Sigmoid colon (tissue), 7 donors: ENCODE measurements at regions of chr21 and their contacts with region 1.

Region 1: DNA sequence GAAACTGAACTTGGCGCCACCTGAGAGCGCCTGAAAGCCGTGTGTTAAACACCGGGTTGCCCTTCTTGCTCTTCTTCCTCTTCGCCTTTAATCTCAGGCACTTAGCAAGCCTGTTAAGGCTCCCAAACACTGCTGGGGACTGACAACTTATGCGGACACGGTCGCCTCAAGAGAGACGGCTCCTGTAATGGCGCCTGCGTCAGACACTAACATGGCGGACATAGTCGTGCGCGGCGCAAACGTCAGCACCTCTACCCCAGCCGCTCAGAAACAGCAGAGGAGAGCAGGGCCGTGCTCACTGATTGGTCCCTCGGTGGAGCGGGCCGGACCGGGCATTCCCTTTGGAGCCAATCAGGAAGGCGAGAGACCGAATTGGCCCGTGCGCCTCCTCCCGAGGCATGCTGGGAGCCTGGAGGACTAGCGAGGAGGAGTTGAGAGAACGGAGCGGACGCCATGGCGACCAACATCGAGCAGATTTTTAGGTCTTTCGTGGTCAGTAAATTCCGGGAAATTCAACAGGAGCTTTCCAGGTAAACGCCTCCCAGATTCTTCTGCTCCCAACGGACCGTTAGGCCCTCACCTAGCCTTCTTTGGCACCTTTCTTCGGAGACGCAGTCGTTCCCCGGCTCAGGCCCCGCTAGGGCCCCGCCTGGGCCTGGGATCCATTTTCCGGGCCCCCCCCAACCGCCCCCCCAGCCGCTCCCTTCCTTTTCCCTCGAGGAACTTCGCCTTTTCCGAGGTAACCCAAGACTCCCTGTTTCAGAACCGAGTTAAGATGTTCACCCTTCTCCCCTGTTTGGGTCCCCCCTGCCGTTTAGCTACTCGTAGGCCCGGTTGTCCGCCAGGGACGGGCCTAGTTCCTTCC is at the start of gene SON:
- DNase-seq: peak; percentile 100
- H3K4me3 ChIP-seq: peak within 1 kb of the TSS; percentile 59 to 79 (median 64)
- H3K27ac ChIP-seq: peak within 1 kb of the TSS; percentile 95 to 99 (median 98)
- H3K4me1 ChIP-seq: peaks cover 0 to 43% (median 40%) of the 10 kb centered on the region in 4 donors
- H3K27me3 ChIP-seq: no peaks in the 10 kb centered on the region
- CTCF ChIP-seq: no peak
- EP300 ChIP-seq: no peak
- POLR2A ChIP-seq: peak; percentile 84 to 88
- total RNA-seq, gene SON: 177 to 244 (median 190) TPM

Region 2: GRCh38 chr21:33324291-33325221 is 218.3 kb before region 1 on chr21 and contains the start of gene IFNAR1:
- intact Hi-C with region 1: loop called (anchors 10 kb)
- DNase-seq: peak; percentile 100
- H3K4me3 ChIP-seq: peak within 1 kb of the TSS; percentile 76 to 99 (median 88)
- H3K27ac ChIP-seq: peak within 1 kb of the TSS; percentile 94 to 98 (median 98)
- H3K4me1 ChIP-seq: peaks cover 0 to 28% (median 19%) of the 10 kb centered on the region in 4 donors
- H3K27me3 ChIP-seq: no peaks in the 10 kb centered on the region
- CTCF ChIP-seq: no peak
- EP300 ChIP-seq: no peak
- POLR2A ChIP-seq: peak; percentile 79 to 90
- total RNA-seq, gene IFNAR1: 23.5 to 32.6 (median 25.5) TPM

Region 3: DNA sequence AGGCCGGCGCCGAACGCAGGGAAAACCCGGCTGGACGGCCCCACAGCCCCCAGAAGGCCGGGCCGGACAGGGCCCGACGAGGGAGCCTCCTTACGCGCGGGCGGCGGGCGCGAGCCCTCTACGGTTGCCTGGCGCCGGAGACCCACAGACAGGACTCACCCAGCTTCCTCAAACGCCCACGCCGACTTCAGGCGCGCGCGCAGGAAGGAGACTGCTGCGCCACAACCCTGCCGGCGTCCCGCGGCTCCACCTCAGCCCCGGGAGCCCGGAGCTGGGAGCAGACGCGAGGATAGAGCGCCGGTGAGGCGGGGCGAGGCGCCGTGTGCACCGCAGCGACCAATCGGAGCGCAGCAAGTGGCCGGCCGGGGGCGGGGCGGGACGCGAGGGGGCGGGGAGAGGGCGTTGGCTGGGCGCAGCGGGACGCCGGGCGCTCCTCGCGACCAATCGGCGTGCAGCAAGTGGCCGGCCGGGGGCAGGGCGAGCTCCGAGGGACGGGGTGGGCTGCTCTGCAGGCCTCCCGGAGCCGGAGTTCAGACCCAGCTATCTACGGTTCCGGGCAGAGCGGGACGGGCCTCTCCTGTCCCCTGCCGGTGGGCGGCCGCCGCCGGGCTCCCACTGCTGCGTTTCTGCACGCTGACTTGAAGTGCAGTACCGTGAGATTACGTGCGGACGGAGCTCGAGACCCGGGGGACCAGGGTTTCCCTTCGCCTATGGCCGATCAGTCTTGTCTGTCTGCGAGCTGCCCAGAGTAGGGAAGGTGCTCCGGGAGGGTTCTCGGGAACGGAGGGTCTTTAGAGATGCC is 63.0 kb before region 1 on chr21 and contains the start of gene TMEM50B:
- intact Hi-C with region 1: loop called (anchors 2 kb)
- DNase-seq: peak; percentile 98
- H3K4me3 ChIP-seq: peak within 1 kb of the TSS; percentile 86 to 99 (median 96)
- H3K27ac ChIP-seq: peak within 1 kb of the TSS; percentile 96 to 100 (median 99)
- H3K4me1 ChIP-seq: peaks cover 3 to 21% (median 17%) of the 10 kb centered on the region in 4 donors
- H3K27me3 ChIP-seq: no peaks in the 10 kb centered on the region
- CTCF ChIP-seq: peak; percentile 46 to 60 (median 51)
- EP300 ChIP-seq: no peak
- POLR2A ChIP-seq: peak; percentile 88 to 93
- total RNA-seq, gene TMEM50B: 63.3 to 106 (median 85.1) TPM

Region 4: GRCh38 chr21:33491373-33492102 is 51.3 kb before region 1 on chr21 and contains the start of gene DNAJC28:
- intact Hi-C with region 1: loop called (anchors 1 kb)
- DNase-seq: peak; percentile 96
- H3K4me3 ChIP-seq: peak within 1 kb of the TSS; percentile 49 to 69 (median 62)
- H3K27ac ChIP-seq: peak within 1 kb of the TSS; percentile 76 to 81 (median 80)
- H3K4me1 ChIP-seq: peaks cover 0 to 8% (median 3%) of the 10 kb centered on the region in 4 donors
- H3K27me3 ChIP-seq: no peaks in the 10 kb centered on the region
- CTCF ChIP-seq: no peak
- EP300 ChIP-seq: no peak
- POLR2A ChIP-seq: peak in 1 of 2 donors; percentile 42
- total RNA-seq, gene DNAJC28: 2.0 to 3.0 (median 2.6) TPM

Region 5: GRCh38 chr21:33588485-33589335 is 45.8 kb after region 1 on chr21 and contains the start of gene DONSON:
- intact Hi-C with region 1: loop called (anchors 2 kb)
- DNase-seq: peak; percentile 91
- H3K4me3 ChIP-seq: peak within 1 kb of the TSS; percentile 48 to 91 (median 78)
- H3K27ac ChIP-seq: peak within 1 kb of the TSS; percentile 89 to 91 (median 90)
- H3K4me1 ChIP-seq: peaks cover 0 to 21% (median 13%) of the 10 kb centered on the region in 4 donors
- H3K27me3 ChIP-seq: no peaks in the 10 kb centered on the region
- CTCF ChIP-seq: no peak
- EP300 ChIP-seq: no peak
- POLR2A ChIP-seq: no peak
- total RNA-seq, gene DONSON: 4.6 to 7.2 (median 5.9) TPM

Region 6: DNA sequence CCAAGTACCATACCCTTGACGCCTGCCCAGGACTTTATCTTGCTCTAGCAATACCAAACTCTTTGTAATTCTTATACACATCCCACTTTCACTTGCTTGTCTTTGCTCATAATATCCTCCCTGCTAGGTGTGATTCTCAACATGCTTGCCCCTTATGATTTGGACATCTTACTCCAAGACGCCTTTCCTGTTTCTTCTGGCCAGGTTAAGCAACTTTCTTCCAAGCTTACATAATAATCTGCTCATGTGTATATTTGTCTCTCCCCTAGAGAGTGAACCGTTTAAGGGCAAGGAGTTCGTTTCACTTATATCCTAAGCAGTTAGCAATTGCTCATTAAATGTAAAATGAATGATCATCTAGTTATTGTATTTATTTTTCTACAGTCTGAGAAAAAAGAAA is 76.9 kb after region 1 on chr21:
- intact Hi-C with region 1: no loop called
- DNase-seq: no peak
- H3K4me3 ChIP-seq: no peak overlapping the region
- H3K27ac ChIP-seq: no peak overlapping the region
- H3K4me1 ChIP-seq: no peaks in the 10 kb centered on the region
- H3K27me3 ChIP-seq: no peaks in the 10 kb centered on the region
- CTCF ChIP-seq: no peak
- EP300 ChIP-seq: no peak
- POLR2A ChIP-seq: no peak

Region 7: GRCh38 chr21:33641336-33642026 is 98.6 kb after region 1 on chr21 and contains the start of gene CRYZL1:
- intact Hi-C with region 1: loop called (anchors 2 kb)
- DNase-seq: peak; percentile 100
- H3K4me3 ChIP-seq: peak within 1 kb of the TSS; percentile 70 to 99 (median 92)
- H3K27ac ChIP-seq: peak within 1 kb of the TSS; percentile 94 to 97 (median 96)
- H3K4me1 ChIP-seq: peaks cover 0 to 34% (median 29%) of the 10 kb centered on the region in 4 donors
- H3K27me3 ChIP-seq: no peaks in the 10 kb centered on the region
- CTCF ChIP-seq: no peak
- EP300 ChIP-seq: peak in 1 of 4 donors; percentile 10
- POLR2A ChIP-seq: peak in 1 of 2 donors; percentile 74
- total RNA-seq, gene CRYZL1: 46.6 to 90.8 (median 62.7) TPM